H1 (cell line): ENCODE measurements at regions of chr4 and their contacts with region 1.

Region 1: DNA sequence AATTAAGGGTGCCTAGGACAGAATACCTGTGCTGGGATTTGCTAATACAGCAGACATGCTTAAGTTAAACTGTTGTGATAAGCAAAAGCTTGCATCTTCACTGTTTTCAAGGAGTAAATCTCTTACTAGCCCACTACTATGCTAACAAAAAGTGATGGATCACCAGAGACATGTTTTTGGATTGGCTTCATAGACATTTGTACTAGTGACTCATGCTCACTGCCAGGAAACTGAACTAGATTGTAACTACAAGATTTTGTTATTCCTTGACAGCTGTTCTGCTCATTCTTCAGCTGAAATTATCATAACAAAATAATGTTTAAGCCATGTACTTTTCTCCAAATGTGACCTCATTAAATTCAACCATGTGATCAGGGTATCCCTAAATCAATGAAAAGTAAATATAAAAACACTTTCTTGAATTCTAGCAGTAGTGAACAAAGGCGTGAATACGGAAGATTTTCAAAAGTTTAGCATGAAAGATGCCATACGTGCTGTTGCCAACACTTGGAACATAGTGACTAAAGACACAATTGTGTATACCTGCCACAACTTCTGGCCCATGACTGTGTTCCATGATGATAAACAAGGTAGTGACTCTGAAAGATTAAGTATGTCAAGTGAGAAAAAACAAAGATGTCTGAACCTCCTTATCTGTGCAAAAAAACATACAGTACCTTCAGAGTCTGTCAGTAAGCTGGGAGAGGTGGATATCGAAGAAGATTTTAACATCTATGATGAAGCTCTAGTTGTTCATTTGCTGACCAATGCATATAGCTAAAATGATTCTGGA is 154.0 kb downstream of the BTC start:
- DNase-seq: no peak
- H3K4me3 ChIP-seq: no peak overlapping the region
- H3K27ac ChIP-seq: no peak overlapping the region
- H3K4me1 ChIP-seq: no peaks in the 10 kb centered on the region
- H3K27me3 ChIP-seq: no peaks in the 10 kb centered on the region
- CTCF ChIP-seq: no peak
- EP300 ChIP-seq: no peak
- POLR2A ChIP-seq: no peak
- RAD21 ChIP-seq: no peak

Region 2: GRCh38 chr4:74623041-74623440 is 17.3 kb before region 1 on chr4:
- CTCF ChIA-PET with region 1: interaction called, 17 read pairs
- POLR2A ChIA-PET with region 1: no interaction called
- DNase-seq: no peak
- H3K4me3 ChIP-seq: no peak overlapping the region
- H3K27ac ChIP-seq: no peak overlapping the region
- H3K4me1 ChIP-seq: no peaks in the 10 kb centered on the region
- H3K27me3 ChIP-seq: peaks cover 0 to 1% (median 0%) of the 10 kb centered on the region in 4 experiments; a peak in 1 of 7 replicates
- CTCF ChIP-seq: peak in 2 of 3 experiments; percentile 57 to 63; a peak in 3 of 4 replicates
- EP300 ChIP-seq: no peak
- POLR2A ChIP-seq: no peak
- RAD21 ChIP-seq: peak; percentile 75 to 80